ENCODE measurements at regions of chr18 and their contacts with region 1.

Region 1: DNA sequence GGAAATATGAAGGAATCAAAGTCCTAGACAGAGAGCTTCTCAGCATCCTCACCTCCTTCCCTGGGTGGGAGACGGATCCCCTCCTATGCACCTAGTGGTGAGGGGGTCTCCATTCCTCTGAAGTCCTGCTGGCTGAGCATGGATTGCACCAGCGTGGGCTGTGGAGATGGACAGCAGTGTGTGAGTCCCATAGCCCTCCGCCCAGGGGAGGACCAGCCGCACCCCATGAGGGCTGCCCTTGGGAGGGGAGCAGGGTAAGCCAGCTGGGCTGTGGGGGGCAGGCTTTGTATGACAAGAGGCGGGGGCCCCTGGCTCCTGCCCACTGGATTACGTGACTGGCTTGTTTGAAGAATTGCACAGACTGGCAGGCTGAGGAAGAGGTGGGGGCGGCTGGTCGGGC is 768.2 kb downstream of the GALR1 start:
- DNase-seq: no peak
- ATAC-seq: no peak

Region 2: GRCh38 chr18:77851802-77852201 is 166.1 kb before region 1 on chr18:
- intact Hi-C with region 1: no loop called
- DNase-seq: no peak
- ATAC-seq: no peak

Region 3: DNA sequence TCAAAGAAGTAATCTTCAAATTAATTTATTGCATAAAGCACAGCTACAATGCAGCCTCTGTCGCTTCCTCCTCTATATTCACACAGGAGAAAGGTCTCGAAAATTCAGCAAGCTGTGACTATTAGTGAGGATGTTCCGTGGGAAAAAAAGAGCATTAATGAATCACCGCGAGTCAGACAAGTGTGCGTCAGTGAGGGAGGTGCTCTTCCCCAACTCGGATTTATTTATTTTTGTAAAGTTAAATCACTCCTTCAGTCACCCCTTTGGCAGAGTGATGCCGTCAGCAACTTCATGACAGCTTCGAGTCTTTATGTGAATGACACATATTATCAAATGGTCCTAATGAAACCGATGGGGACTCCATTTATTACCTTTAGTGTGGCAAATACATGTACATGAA is 312.9 kb after region 1 on chr18:
- intact Hi-C with region 1: loop called (anchors 10 kb)
- DNase-seq: no peak
- ATAC-seq: no peak